Activated T-helper 1 cell treated with anti-CD3 and anti-CD28 coated beads, Interleukin-12 subunit alpha, Interleukin-12 subunit beta, Interleukin-2, Interleukin-4 antibody, amounts not matched to agents 30 ng/mL and 10 ng/mL and 1 ng/mL, durations not matched to agents 14 hours and 24 hours and 36 hours (primary cell): ENCODE measurements at regions of chr15 and their contacts with region 1.

Region 1: DNA sequence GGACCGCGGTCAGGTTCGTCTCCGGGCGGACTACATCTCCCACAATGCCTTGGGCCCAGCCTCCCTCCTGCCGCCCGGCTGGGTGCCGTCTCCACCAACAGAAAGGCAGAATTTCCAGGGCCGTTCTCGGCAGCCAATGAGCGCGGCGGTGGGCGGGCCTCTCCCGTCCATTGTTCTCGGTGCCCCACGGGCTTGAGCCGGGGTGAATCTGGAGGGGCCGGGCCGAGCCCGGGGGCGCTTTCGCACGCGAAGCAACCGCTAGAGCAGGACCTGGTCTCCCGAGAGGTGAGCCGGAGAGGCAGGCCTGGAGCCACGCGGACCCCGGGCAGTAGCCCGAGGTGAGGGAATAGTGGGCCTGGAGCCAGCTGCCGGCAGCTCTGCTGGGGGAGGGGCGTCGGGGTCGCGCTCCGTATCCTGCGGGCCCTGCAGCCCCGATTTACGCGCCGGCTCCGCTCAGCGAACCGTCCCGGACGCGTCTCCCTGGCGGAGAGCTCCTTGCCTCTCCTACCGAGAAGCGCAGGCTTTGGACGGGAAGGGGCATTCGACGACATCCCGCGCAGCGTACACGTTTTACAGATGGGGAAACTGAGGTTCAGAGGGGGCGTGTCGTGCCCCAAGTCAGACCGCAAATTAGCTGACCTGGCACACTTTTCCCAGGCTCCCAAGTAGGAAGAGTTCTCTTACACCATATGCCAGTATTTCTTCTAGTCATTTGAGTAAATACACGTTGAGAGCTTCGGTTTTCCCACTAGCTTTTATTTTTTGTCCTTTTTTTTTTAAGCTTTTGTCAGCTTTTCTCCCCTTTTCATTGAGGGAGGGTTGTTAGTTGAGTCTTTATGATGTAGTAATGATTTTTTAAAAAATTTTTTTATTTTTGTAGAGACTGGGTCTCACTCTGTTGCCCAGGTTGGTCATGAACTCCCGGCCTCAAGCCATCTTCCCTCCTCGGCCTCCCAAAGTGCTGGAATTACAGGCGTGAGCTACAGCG is at the start of gene ZSCAN2:
- DNase-seq: peak; percentile 92
- H3K4me3 Mint-ChIP-seq: peak within 1 kb of the TSS; percentile 89
- H3K27ac Mint-ChIP-seq: peak within 1 kb of the TSS; percentile 72
- H3K4me1 Mint-ChIP-seq: peaks cover 59% of the 10 kb centered on the region
- H3K27me3 Mint-ChIP-seq: no peaks in the 10 kb centered on the region
- total RNA-seq, gene ZSCAN2: 6.5 and 7.0 TPM in 2 replicates

Region 2: GRCh38 chr15:84883433-84883832 is 282.3 kb after region 1 on chr15:
- intact Hi-C with region 1: loop called (anchors 1 kb)
- DNase-seq: no peak
- H3K4me3 Mint-ChIP-seq: no peak overlapping the region
- H3K27ac Mint-ChIP-seq: no peak overlapping the region
- H3K4me1 Mint-ChIP-seq: no peaks in the 10 kb centered on the region
- H3K27me3 Mint-ChIP-seq: no peaks in the 10 kb centered on the region

Region 3: DNA sequence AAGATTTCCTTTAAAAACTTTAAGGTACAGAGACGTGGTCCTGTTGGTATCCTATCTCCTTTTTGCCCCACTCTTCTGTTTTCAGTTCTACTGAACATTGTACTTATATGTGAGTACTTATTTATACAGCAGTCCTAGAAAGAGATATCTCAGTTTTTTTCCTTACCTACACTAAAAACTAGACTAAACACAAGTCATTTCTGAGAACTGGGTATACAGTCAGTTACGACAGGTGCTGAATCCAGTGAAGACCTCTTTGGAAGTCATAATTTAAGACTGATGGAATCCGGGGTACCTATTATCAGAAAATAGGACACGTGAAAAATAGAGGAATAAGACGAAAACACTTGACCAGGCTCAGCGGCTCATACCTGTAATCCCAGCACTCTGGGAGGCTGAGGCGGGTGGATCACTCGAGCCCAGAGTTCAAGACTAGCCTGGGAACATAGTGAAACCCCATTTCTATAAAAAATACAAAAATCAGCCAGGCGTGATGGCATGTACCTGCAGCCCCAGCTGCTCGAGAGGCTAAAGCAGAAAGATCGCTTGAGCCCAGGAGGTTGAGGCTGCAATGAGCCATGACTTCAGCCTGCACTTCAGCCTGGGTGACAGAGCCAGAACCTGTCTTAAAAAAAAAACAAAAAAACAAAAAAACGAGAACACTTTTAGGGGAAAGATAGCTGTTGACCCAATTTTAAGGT is 1117.3 kb after region 1 on chr15:
- intact Hi-C with region 1: no loop called
- DNase-seq: no peak
- H3K4me3 Mint-ChIP-seq: no peak overlapping the region
- H3K27ac Mint-ChIP-seq: no peak overlapping the region
- H3K4me1 Mint-ChIP-seq: peaks cover 40% of the 10 kb centered on the region
- H3K27me3 Mint-ChIP-seq: no peaks in the 10 kb centered on the region